Activated CD8-positive, alpha-beta T cell treated with anti-CD3 and anti-CD28 coated beads, Interleukin-2, amount 10 ng/mL, durations not matched to agents 7 days and 5 days (primary cell): ENCODE measurements at regions of chr11 and their contacts with region 1.

Region 1: GRCh38 chr11:87097582-87097981 is 59.8 kb downstream of the TMEM135 start:
- DNase-seq: peak; percentile 64
- ATAC-seq: peak; percentile 90
- H3K4me3 Mint-ChIP-seq: no peak overlapping the region
- H3K27ac Mint-ChIP-seq: peak overlapping the region; percentile 27
- H3K4me1 Mint-ChIP-seq: peaks cover 8% of the 10 kb centered on the region
- H3K27me3 Mint-ChIP-seq: no peaks in the 10 kb centered on the region

Region 2: DNA sequence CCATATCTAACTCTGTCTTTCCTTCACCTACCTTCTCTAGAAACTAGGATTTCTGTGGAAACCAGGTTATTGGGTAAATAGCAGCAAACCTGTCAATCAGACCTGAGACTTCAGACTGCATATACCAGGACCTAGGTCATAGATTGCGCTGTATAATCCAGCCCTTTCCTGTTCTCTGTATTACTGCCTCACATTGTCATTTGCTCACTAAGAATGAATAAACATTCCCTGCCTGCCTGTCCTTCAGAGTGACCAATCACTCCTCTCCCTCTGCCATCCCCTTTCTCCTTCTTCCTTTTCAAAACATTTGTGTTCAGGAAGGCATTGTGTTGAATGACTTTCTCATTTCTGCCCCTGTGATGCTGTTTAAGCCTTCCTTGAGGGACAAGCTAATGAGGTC is 128.3 kb before region 1 on chr11:
- CTCF ChIA-PET with region 1: no interaction called
- POLR2A ChIA-PET with region 1: no interaction called
- DNase-seq: no peak
- ATAC-seq: no peak
- H3K4me3 Mint-ChIP-seq: no peak overlapping the region
- H3K27ac Mint-ChIP-seq: no peak overlapping the region
- H3K4me1 Mint-ChIP-seq: no peaks in the 10 kb centered on the region
- H3K27me3 Mint-ChIP-seq: peaks cover 16% of the 10 kb centered on the region

Region 3: DNA sequence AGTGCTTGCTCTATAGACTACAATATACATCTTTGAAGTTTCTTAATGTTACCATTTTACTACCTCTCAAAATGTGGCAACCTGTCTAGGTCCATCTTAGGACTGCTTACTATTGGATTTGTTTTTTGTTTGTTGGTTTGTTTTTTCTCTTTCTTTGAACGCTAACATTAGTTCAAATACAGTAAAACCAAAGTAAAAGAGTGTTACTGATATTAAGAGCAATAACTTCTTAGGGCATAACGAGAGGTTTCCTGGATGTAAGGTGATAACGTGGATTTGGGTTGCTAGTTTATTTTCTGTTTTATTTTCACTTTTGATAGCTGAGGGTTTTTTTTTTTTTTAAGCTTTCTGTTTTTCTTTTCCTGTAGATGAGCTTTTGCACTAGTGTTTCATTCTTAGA is 16.2 kb before region 1 on chr11:
- CTCF ChIA-PET with region 1: interaction called, 17 read pairs
- POLR2A ChIA-PET with region 1: no interaction called
- DNase-seq: no peak
- ATAC-seq: peak; percentile 60
- H3K4me3 Mint-ChIP-seq: peak overlapping the region; percentile 77
- H3K27ac Mint-ChIP-seq: peak overlapping the region; percentile 90
- H3K4me1 Mint-ChIP-seq: peaks cover 24% of the 10 kb centered on the region
- H3K27me3 Mint-ChIP-seq: no peaks in the 10 kb centered on the region

Region 4: DNA sequence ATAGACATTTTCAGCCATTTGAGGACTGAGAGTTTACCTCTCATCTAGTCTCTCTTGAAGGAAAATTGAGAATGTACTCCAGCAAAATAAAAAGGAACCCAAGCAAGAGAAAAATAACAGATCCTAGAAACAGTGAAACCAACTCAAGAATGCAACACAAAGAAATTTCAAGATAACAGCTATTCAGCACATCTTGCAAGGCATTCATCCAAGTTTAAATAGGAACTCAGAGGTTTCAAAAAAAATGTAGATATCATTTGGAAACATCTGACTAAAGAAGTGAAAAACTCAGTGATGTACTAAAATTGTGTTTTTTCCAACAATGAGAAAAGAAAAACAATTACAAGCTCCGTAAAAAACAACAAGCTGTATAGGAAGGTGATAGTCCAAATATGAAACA is 16.5 kb after region 1 on chr11:
- CTCF ChIA-PET with region 1: interaction called, 14 read pairs
- POLR2A ChIA-PET with region 1: no interaction called
- DNase-seq: no peak
- ATAC-seq: no peak
- H3K4me3 Mint-ChIP-seq: no peak overlapping the region
- H3K27ac Mint-ChIP-seq: no peak overlapping the region
- H3K4me1 Mint-ChIP-seq: no peaks in the 10 kb centered on the region
- H3K27me3 Mint-ChIP-seq: no peaks in the 10 kb centered on the region